ENCODE measurements at regions of chr2 and their contacts with region 1.

Region 1: GRCh38 chr2:200483729-200484198 is 26.1 kb downstream of the KCTD18 start:
- DNase-seq: no peak
- ATAC-seq: no peak
- H3K4me3 ChIP-seq: no peak overlapping the region
- H3K27ac ChIP-seq: no peak overlapping the region
- H3K4me1 ChIP-seq: no peaks in the 10 kb centered on the region
- H3K27me3 ChIP-seq: no peaks in the 10 kb centered on the region

Region 2: GRCh38 chr2:199366406-199366805 is 1117.4 kb before region 1 on chr2:
- intact Hi-C with region 1: no loop called
- DNase-seq: no peak
- ATAC-seq: no peak
- H3K4me3 ChIP-seq: no peak overlapping the region
- H3K27ac ChIP-seq: no peak overlapping the region
- H3K4me1 ChIP-seq: no peaks in the 10 kb centered on the region
- H3K27me3 ChIP-seq: no peaks in the 10 kb centered on the region

Region 3: GRCh38 chr2:199979832-199980628 is 503.7 kb before region 1 on chr2:
- intact Hi-C with region 1: loop called (anchors 2 to 5 kb)
- DNase-seq: peak; percentile 87 to 94
- ATAC-seq: peak; percentile 84
- H3K4me3 ChIP-seq: no peak overlapping the region
- H3K27ac ChIP-seq: no peak overlapping the region
- H3K4me1 ChIP-seq: no peaks in the 10 kb centered on the region
- H3K27me3 ChIP-seq: no peaks in the 10 kb centered on the region

Measured in aorta (tissue), 5 donors.